ENCODE measurements at regions of chr3 and their contacts with region 1.

Region 1: GRCh38 chr3:4606911-4607310 is 113.8 kb downstream of the ITPR1 start:
- DNase-seq: no peak
- ATAC-seq: no peak
- H3K4me3 ChIP-seq: no peak overlapping the region
- H3K27ac ChIP-seq: no peak overlapping the region
- H3K4me1 ChIP-seq: peaks cover 5% of the 10 kb centered on the region; the same call in 1 of the 2 replicates
- H3K27me3 ChIP-seq: no peaks in the 10 kb centered on the region
- CTCF ChIP-seq: no peak
- EP300 ChIP-seq: no peak
- POLR2A ChIP-seq: no peak
- RAD21 ChIP-seq: no peak

Region 2: DNA sequence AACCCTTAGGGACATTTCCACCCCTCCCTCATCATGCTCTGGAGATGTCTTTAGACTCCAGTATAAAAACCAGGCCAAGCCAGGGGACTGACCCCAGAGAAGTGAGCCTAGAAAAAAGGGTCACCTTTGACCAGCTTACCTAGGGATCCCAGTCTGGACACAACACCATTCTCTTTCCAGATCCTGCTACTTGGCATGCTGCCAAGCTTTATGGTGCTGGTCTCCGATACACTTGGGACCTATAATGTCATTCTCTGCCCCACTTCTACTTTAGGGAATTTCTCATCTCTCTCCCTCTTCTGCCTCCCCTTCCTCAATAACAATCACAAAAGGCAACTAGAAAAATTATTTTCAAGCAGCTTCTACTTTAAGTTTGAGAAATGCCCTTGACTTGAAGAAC is 683.3 kb before region 1 on chr3:
- CTCF ChIA-PET with region 1: no interaction called
- POLR2A ChIA-PET with region 1: no interaction called
- in situ Hi-C with region 1: no loop called
- intact Hi-C with region 1: loop called (anchors 5 kb)
- DNase-seq: no peak
- ATAC-seq: no peak
- H3K4me3 ChIP-seq: no peak overlapping the region
- H3K27ac ChIP-seq: no peak overlapping the region
- H3K4me1 ChIP-seq: no peaks in the 10 kb centered on the region
- H3K27me3 ChIP-seq: no peaks in the 10 kb centered on the region
- CTCF ChIP-seq: no peak
- EP300 ChIP-seq: no peak
- POLR2A ChIP-seq: no peak
- RAD21 ChIP-seq: no peak

Measured in HepG2 (cell line).